Sigmoid colon (tissue), 7 donors: ENCODE measurements at regions of chr5 and their contacts with region 1.

Region 1: DNA sequence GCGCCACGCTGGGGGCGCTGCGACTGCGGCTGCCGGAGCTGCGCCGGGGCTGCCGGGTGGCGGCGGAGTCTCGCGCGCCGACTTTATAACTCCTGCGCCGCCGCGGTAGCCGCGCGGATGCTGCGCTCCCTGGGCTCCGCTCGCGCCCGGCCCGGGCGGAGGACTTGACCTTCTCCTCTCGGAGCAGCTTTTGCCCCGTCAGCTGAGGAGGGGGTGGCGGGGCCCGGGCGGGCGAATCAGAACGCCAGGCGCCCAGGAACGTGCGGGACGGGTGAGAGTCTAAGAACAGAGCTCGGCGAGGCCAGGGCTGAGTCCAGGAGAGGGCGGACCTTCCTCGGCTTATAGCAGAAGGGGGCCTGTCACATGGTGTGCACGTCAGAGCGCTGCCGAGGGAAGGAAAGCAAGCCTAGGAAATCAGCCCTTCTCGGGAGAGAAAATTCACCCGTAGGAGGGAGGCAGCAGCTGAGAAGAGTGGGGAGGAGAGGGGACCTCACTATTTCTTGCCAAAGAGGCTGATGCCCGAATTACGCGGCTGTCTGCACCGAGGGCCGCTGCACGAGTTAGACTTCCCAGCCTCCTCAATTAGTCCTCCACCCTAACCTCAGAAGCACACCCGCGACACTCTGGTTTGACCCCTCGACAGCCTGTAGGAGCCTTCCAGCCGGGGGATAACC is at the start of gene FOXD1:
- DNase-seq: peak; percentile 75
- H3K4me3 ChIP-seq: peak within 1 kb of the TSS; percentile 21 to 39 (median 35)
- H3K27ac ChIP-seq: peak within 1 kb of the TSS in 1 of 4 donors; percentile 93
- H3K4me1 ChIP-seq: peaks cover 0 to 35% (median 29%) of the 10 kb centered on the region in 4 donors
- H3K27me3 ChIP-seq: peaks cover 79 to 95% (median 89%) of the 10 kb centered on the region in 3 donors
- CTCF ChIP-seq: no peak
- EP300 ChIP-seq: no peak
- POLR2A ChIP-seq: no peak
- total RNA-seq, gene FOXD1: 0.36 to 0.49 TPM in 2 of 4 donors, not detected in the others

Region 2: DNA sequence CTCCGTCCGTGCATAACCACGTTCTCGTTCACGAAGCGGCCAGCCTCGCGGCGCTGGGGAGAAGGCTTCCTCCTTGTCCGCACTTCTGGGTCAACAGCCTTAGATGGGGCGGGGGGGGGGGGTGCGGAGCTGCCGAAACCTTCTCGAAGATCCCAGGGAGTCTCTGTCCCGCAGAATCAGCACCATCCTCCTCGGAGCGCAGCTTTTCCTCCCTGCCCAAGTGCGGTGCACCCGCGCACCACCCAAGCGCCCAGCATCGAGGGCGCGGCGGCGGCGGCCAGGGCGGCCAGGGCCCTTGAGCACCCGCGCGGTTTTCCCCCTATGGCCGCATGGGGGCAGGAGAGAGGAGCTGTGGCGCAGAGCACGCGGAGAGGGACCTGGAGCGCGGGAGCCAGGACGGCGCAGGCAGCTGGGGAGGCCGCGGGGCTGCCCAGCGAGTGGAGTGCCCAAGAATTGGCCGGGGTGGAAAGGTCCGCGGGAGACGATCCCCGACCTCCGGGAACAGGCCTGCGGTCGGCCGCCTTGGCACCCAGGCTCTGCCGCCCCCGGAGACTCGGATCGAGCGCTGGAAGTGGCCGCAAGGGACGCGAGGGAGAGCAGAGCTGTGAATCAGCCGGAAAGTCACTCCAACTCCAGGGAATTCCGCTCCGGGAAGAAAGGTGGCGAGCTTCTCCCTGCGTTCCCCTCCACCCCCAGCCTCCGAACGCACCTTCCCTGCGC is 232.5 kb before region 1 on chr5:
- intact Hi-C with region 1: loop called (anchors 1 kb)
- DNase-seq: peak; percentile 83
- H3K4me3 ChIP-seq: peak overlapping the region; percentile 18 to 46 (median 38)
- H3K27ac ChIP-seq: peak overlapping the region in 1 of 4 donors; percentile 60
- H3K4me1 ChIP-seq: peaks cover 0 to 13% (median 10%) of the 10 kb centered on the region in 4 donors
- H3K27me3 ChIP-seq: peaks cover 0 to 94% (median 44%) of the 10 kb centered on the region in 3 donors
- CTCF ChIP-seq: peak; percentile 66 to 88 (median 78)
- EP300 ChIP-seq: no peak
- POLR2A ChIP-seq: no peak

Region 3: GRCh38 chr5:73312146-73312871 is 136.3 kb before region 1 on chr5:
- intact Hi-C with region 1: no loop called
- DNase-seq: no peak
- H3K4me3 ChIP-seq: no peak overlapping the region
- H3K27ac ChIP-seq: no peak overlapping the region
- H3K4me1 ChIP-seq: peaks cover 0 to 12% (median 10%) of the 10 kb centered on the region in 4 donors
- H3K27me3 ChIP-seq: peaks cover 7 to 54% (median 13%) of the 10 kb centered on the region in 3 donors
- CTCF ChIP-seq: no peak
- EP300 ChIP-seq: no peak
- POLR2A ChIP-seq: no peak

Region 4: GRCh38 chr5:73370640-73371583 is 77.7 kb before region 1 on chr5:
- intact Hi-C with region 1: loop called (anchors 10 kb)
- DNase-seq: no peak
- H3K4me3 ChIP-seq: no peak overlapping the region
- H3K27ac ChIP-seq: no peak overlapping the region
- H3K4me1 ChIP-seq: peaks cover 0 to 47% (median 31%) of the 10 kb centered on the region in 4 donors
- H3K27me3 ChIP-seq: no peaks in the 10 kb centered on the region
- CTCF ChIP-seq: no peak
- EP300 ChIP-seq: no peak
- POLR2A ChIP-seq: no peak

Region 5: DNA sequence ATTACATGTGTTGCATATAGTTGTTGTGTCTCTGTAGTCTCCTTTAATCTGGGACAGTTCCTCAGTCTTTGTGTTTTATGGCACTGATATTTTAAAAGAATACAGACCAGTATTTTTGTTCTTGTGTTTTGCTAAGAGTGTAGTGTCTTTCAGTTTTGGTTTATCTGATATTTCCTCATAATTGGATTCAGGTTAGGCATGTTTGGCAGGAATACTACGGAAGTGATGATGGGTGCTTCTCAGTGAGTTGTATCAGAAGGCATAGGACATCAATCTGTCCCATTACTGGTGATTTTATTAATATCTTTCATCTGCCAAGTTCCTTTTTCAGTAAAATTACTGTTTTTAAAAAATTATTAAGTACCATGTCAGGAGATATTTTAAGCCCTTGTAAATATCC is 390.3 kb after region 1 on chr5:
- intact Hi-C with region 1: no loop called
- DNase-seq: no peak
- H3K4me3 ChIP-seq: no peak overlapping the region
- H3K27ac ChIP-seq: no peak overlapping the region
- H3K4me1 ChIP-seq: no peaks in the 10 kb centered on the region
- H3K27me3 ChIP-seq: no peaks in the 10 kb centered on the region
- CTCF ChIP-seq: no peak
- EP300 ChIP-seq: no peak
- POLR2A ChIP-seq: no peak